PC-9 (cell line): ENCODE measurements at regions of chr1 and their contacts with region 1.

Region 1: GRCh38 chr1:109548321-109549267 is at the start of gene GNAI3:
- DNase-seq: peak; percentile 90 to 97
- H3K4me3 ChIP-seq: peak within 1 kb of the TSS; percentile 93
- H3K27ac ChIP-seq: peak within 1 kb of the TSS; percentile 91
- H3K4me1 ChIP-seq: peaks cover 23% of the 10 kb centered on the region
- H3K27me3 ChIP-seq: no peaks in the 10 kb centered on the region
- CTCF ChIP-seq: peak; percentile 42; the same call in 1 of the 2 replicates
- total RNA-seq, gene GNAI3: 7.6 and 10.0 TPM in 2 replicates

Region 2: GRCh38 chr1:109441069-109441468 is 107.5 kb before region 1 on chr1:
- CTCF ChIA-PET with region 1: no interaction called
- POLR2A ChIA-PET with region 1: no interaction called
- intact Hi-C with region 1: no loop called
- DNase-seq: no peak
- H3K4me3 ChIP-seq: no peak overlapping the region
- H3K27ac ChIP-seq: no peak overlapping the region
- H3K4me1 ChIP-seq: peaks cover 18% of the 10 kb centered on the region
- H3K27me3 ChIP-seq: peaks cover 28% of the 10 kb centered on the region; the same call in 1 of the 2 replicates
- CTCF ChIP-seq: no peak

Region 3: GRCh38 chr1:109564194-109564878 is 15.7 kb after region 1 on chr1:
- CTCF ChIA-PET with region 1: no interaction called
- POLR2A ChIA-PET with region 1: interaction called, 10 read pairs
- intact Hi-C with region 1: no loop called
- DNase-seq: no peak
- H3K4me3 ChIP-seq: no peak overlapping the region
- H3K27ac ChIP-seq: no peak overlapping the region
- H3K4me1 ChIP-seq: peaks cover 39% of the 10 kb centered on the region
- H3K27me3 ChIP-seq: no peaks in the 10 kb centered on the region
- CTCF ChIP-seq: no peak

Region 4: DNA sequence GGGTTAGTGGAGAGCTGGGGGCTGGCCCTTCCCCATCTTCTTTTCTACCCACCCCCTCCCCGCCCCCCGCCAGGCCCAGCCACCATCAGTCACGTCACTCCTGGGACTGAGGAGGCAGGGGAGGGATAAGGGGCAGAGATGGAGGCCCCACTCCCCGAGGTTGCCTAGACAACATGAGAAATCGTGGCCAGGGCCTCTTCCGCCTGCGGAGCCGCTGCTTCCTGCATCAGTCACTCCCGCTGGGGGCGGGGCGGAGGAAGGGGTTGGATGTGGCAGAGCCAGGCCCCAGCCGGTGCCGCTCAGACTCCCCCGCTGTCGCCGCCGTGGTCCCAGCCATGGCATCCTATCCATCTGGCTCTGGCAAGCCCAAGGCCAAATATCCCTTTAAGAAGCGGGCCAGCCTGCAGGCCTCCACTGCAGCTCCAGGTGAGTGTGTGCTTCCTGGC is 72.3 kb after region 1 on chr1:
- CTCF ChIA-PET with region 1: interaction called, 3 read pairs
- POLR2A ChIA-PET with region 1: interaction called, 8 read pairs
- intact Hi-C with region 1: loop called (anchors 5 kb)
- DNase-seq: peak; percentile 83 to 84
- H3K4me3 ChIP-seq: peak overlapping the region; percentile 78
- H3K27ac ChIP-seq: peak overlapping the region; percentile 49
- H3K4me1 ChIP-seq: peaks cover 42% of the 10 kb centered on the region
- H3K27me3 ChIP-seq: no peaks in the 10 kb centered on the region
- CTCF ChIP-seq: no peak

Region 5: DNA sequence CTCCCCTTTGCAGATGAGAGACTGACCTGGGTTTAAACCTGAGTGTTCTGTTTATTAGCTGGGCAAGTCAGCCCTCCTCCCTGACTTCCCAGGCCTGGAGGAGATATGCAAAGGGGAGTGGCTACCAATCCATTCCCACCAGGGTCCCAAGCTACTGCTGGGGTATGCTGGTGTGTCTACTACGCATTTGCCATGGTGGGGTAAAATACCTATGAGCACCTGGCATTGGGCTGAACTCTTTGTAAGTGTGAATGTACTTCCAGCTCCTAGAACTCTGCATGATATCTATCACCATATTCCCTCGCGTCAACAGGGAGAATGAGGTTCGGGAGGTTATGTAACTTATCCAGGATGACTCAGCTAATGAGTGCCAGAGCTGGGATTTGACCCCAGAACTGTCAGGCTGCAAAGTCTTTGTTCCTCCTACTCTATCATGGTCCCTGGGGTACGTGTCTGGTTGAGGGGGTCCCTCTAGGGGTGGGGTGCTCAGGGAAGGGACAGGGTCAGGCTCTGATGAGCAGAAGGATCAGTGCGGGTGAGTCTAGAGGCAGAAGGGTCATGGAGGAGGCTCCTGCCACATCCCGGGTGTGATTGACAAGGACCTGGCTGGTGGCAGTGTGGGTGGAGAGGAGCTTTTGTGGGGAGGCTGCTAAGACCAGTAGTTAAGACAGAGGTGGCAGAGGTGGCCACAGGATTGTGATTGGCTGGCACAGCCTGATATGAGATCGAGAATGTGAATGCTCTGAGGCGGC is 87.8 kb after region 1 on chr1:
- CTCF ChIA-PET with region 1: interaction called, 22 read pairs
- POLR2A ChIA-PET with region 1: interaction called, 6 read pairs
- intact Hi-C with region 1: loop called (anchors 1 kb)
- DNase-seq: peak; percentile 63 to 70
- H3K4me3 ChIP-seq: no peak overlapping the region
- H3K27ac ChIP-seq: peak overlapping the region; percentile 52
- H3K4me1 ChIP-seq: peaks cover 18% of the 10 kb centered on the region
- H3K27me3 ChIP-seq: no peaks in the 10 kb centered on the region
- CTCF ChIP-seq: no peak

Region 6: DNA sequence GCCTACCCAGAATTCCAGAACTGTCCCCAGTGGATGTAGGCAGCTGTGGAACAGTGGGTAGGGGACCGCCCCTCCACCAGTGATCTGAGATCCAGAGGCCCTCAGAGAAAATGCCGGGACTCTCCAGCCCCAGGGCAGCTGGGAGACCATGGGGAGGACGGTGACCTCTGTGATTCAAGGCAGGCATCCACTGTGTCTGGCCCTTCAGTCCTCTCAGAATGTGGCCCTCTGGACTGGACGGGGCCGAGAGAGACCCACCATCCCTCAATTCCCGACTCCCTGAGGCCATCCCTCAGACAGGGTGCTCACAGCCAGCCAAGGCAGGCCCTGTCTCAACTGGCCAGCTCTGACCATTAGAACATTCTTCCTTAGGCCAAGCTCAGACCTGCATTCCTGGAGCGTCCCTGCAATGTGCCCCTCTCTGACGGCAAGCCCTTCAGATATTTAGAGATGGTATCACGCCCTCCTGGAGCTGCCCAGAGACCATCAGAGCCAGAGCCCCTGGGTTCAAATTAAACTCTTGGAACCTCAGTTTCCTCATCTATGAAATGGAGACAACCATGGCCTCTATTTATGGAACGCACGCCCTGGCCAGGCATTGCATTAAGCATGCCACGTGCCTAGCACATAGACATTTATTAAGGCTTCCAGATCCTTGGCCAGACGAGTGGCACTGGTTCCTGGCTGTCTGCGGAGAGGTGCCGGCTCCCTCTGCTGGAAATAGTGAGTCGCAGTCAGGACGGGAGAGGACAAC is 224.7 kb after region 1 on chr1:
- CTCF ChIA-PET with region 1: interaction called, 6 read pairs
- POLR2A ChIA-PET with region 1: no interaction called
- intact Hi-C with region 1: loop called (anchors 1 kb)
- DNase-seq: peak; percentile 78 to 82
- H3K4me3 ChIP-seq: no peak overlapping the region
- H3K27ac ChIP-seq: no peak overlapping the region
- H3K4me1 ChIP-seq: peaks cover 46% of the 10 kb centered on the region
- H3K27me3 ChIP-seq: no peaks in the 10 kb centered on the region
- CTCF ChIP-seq: peak; percentile 97

Region 7: GRCh38 chr1:109959974-109960744 is 411.6 kb after region 1 on chr1:
- CTCF ChIA-PET with region 1: no interaction called
- POLR2A ChIA-PET with region 1: no interaction called
- intact Hi-C with region 1: no loop called
- DNase-seq: peak; percentile 59 to 99
- H3K4me3 ChIP-seq: peak overlapping the region; percentile 16; the same call in 1 of the 2 replicates
- H3K27ac ChIP-seq: peak overlapping the region; percentile 97
- H3K4me1 ChIP-seq: peaks cover 57% of the 10 kb centered on the region
- H3K27me3 ChIP-seq: no peaks in the 10 kb centered on the region
- CTCF ChIP-seq: peak; percentile 58

Region 8: DNA sequence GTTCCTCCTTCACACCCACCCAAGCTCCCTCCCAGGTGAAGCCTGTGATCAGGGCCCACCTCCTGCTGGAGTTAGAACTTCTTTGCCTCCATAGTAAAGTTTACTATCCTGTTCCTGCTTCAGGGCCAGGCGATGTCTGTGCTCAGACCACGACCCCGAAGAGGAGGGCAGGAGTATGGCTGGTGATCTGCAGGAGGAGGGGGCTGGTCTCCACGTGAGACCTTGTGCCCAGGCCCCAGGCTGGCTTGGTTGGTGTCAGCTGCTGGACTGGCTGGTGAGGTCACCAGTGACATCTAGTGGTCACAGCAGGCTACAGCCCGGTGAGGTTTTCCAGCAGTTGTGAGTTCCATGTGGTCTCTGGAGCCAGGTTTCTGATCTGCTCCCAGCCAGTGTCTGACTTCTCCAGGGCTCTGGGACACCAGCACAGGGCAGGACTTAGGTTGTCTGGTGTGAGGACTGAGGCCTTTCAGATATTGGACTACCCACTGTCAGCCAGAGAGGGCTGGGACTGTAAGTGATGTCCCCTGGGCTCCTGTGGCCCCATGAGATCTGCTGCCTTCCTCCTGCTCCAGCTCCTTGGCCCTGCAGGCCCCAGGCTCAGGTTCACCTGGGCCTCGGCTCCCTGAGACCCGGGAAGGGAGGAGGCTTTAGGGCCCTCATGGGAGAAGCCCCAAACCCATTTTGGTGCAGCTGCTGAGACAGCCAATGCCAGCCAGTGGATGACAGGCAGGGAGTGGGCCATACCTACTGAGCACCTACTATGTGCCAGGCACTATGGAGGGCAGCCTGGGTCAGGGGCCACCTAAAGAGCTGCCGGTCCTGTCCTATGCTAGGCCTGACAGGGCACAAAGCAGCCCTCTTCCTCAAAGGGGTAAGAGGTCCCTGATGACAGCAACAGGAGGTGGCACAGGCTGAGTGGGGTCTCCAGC is 557.7 kb after region 1 on chr1:
- CTCF ChIA-PET with region 1: no interaction called
- POLR2A ChIA-PET with region 1: no interaction called
- intact Hi-C with region 1: loop called (anchors 1 kb)
- DNase-seq: peak; percentile 60 to 70
- H3K4me3 ChIP-seq: no peak overlapping the region
- H3K27ac ChIP-seq: 0 out of 2 replicates have a peak overlapping the region, but pooled peaks have one; percentile 99
- H3K4me1 ChIP-seq: peaks cover 84% of the 10 kb centered on the region
- H3K27me3 ChIP-seq: no peaks in the 10 kb centered on the region
- CTCF ChIP-seq: peak; percentile 98